MCF 10A (cell line): ENCODE measurements at regions of chr14 and their contacts with region 1.

Region 1: DNA sequence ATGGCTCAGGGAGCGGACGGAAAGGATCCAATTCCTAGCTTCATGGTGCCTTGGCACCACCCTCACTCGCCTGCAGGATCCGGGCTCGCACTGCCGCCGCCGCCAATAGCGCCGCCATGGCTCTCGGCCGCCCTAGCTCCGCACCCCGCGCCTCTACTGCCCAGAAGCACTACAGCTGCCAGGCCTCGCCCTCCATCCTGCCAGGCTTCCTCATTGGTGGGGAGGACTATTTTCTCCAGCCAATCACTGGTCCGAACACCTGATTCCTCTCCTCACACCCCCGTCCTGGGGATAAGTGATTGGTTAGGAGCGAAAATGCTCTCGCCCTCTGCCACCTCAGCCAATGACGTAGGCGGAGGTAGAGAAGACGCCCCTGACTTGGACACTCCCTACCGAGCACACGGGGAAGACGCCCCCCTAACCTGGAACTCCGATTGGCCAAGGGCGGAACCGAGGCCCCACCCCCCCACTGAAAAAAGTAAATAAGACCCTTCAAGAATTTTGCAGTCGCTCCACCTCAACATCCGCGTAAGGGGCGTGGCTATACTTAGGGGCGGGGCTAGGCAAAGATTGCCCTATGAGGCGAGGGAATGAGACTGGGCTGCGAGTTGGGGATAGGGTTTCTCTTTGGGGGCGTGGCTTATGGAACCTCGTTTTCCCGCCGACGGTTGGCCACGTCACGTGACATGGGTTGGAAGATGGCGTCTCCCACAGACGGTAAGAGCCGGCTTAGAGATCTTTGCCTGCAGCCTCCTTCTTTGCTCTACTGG is at the starts of genes ALDH6A1 and LIN52:
- DNase-seq: peak; percentile 100
- H3K4me3 Mint-ChIP-seq: peak within 1 kb of the TSS; percentile 93
- H3K27ac Mint-ChIP-seq: peak within 1 kb of the TSS; percentile 99
- H3K4me1 Mint-ChIP-seq: peaks cover 14% of the 10 kb centered on the region
- H3K27me3 Mint-ChIP-seq: no peaks in the 10 kb centered on the region
- CTCF ChIP-seq: no peak
- total RNA-seq, gene ALDH6A1: 22.4 and 28.9 TPM in 2 replicates
- total RNA-seq, gene LIN52: 8.7 and 9.5 TPM in 2 replicates

Region 2: DNA sequence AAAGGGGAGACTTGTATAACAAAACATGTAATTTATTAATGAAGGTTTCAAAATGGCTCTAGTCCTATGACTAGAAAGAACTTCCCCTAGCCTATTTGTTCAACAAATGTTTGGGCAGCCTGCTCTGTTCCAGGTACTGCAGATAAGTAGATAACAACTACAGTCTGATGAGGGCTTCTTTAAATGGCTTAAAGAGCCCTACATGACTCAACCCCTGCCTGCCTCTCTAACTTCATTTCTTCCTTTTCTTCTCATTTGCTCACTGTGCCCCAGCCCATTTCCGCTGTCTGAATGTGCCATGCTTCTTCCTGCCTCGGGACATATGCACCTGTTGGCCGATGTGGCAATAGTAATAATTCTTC is 21.7 kb before region 1 on chr14:
- CTCF ChIA-PET with region 1: interaction called, 3 read pairs
- POLR2A ChIA-PET with region 1: interaction called, 33 read pairs
- intact Hi-C with region 1: no loop called
- DNase-seq: peak; percentile 59
- H3K4me3 Mint-ChIP-seq: no peak overlapping the region
- H3K27ac Mint-ChIP-seq: peak overlapping the region; percentile 57
- H3K4me1 Mint-ChIP-seq: peaks cover 13% of the 10 kb centered on the region
- H3K27me3 Mint-ChIP-seq: no peaks in the 10 kb centered on the region
- CTCF ChIP-seq: no peak